ENCODE measurements at regions of chr19 and their contacts with region 1.

Region 1: DNA sequence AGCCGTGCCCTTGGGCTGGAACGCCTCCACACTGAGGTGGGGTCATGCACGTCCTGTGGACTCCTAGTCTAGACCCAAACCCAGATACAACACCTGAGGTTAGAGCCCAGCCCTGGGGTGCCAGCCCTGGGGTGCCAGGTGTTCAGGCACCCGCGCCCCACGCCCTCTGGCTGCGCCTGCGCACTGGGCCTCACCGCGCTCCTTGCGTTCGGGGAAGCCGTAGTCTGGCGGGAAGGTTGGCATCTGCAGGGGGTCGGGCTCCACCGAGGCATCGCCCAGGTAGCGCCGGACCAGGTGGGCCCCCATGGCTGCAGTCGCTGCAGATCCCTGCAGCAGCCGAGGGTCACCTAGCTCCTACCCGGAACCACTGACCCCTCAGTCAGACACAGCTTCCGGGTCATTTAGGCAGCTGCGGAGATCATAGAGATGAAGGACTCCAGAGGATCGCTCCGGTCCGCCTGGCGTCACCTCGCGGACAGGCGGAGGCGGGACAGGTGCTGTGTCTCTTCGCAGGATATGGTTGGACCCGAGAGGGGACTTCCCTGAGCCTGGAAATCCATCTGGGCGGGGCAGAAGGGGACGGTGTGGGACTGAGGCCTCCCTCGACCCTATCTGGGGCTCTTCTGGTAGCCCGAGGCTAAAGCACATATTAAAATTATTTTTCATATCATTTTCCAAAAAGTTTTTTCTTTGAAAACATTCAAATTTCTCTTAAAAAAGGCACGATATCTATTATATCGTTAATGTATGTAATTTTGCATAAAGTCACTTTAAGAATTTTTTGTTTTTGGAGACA is at the start of gene NDUFB7:
- DNase-seq: peak; percentile 76 to 91 (median 87)
- ATAC-seq: peak; percentile 98
- H3K4me3 ChIP-seq: peak within 1 kb of the TSS; percentile 99
- H3K4me3 Mint-ChIP-seq: peak within 1 kb of the TSS; percentile 92 to 97 (median 96)
- H3K27ac ChIP-seq: peak within 1 kb of the TSS; percentile 74
- H3K27ac Mint-ChIP-seq: peak within 1 kb of the TSS; percentile 83 to 96 (median 89)
- H3K4me1 ChIP-seq: peaks cover 14% of the 10 kb centered on the region in 2 donors
- H3K4me1 Mint-ChIP-seq: peaks cover 26 to 54% (median 37%) of the 10 kb centered on the region in 7 donors
- H3K27me3 ChIP-seq: no peaks in the 10 kb centered on the region
- H3K27me3 Mint-ChIP-seq: no peaks in the 10 kb centered on the region
- total RNA-seq, gene NDUFB7: 50.6 to 129 (median 63.4) TPM

Region 2: GRCh38 chr19:14091081-14091812 is 480.6 kb before region 1 on chr19:
- CTCF ChIA-PET with region 1: no interaction called
- POLR2A ChIA-PET with region 1: no interaction called
- intact Hi-C with region 1: loop called in 1 of 2 experiments (anchors 2 kb)
- DNase-seq: peak; percentile 56 to 89 (median 84)
- ATAC-seq: peak; percentile 71
- H3K4me3 ChIP-seq: peak overlapping the region; percentile 99
- H3K4me3 Mint-ChIP-seq: peak overlapping the region; percentile 81 to 100 (median 98)
- H3K27ac ChIP-seq: peak overlapping the region; percentile 89
- H3K27ac Mint-ChIP-seq: peak overlapping the region; percentile 89 to 100 (median 98)
- H3K4me1 ChIP-seq: peaks cover 8 to 10% of the 10 kb centered on the region in 2 donors
- H3K4me1 Mint-ChIP-seq: peaks cover 13 to 21% (median 18%) of the 10 kb centered on the region in 7 donors
- H3K27me3 ChIP-seq: no peaks in the 10 kb centered on the region
- H3K27me3 Mint-ChIP-seq: no peaks in the 10 kb centered on the region

Region 3: DNA sequence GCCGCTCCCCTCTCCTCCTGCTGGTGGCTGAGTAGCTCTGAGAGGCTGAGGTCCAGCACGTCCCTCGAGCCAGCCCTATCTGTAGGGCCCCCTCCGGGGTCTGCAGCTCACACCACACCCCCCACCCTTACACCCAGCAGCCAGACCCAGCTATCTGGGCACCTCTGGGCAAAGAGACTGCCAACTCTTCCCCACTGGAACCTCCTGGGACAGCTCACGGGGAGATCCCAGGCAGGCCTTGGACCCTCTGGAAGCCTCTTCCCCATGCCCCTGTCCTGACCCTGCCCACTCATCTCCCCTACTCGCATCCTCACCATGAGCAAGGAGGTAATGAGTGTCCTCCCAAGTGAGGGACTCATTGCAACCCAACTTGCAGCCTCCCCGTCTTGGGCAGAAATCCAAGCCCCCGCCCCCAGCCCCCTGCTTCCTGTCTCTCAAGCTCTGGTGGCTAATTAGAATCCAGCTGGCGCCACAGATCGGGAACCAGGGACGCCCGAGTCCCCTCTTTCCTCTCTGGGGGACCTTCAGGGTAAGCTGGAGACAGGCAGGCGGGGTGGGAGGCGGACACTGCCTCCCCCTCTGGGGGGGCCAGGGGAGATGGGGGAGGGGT is 388.0 kb before region 1 on chr19:
- CTCF ChIA-PET with region 1: no interaction called
- POLR2A ChIA-PET with region 1: no interaction called
- intact Hi-C with region 1: no loop called
- DNase-seq: no peak
- ATAC-seq: no peak
- H3K4me3 ChIP-seq: no peak overlapping the region
- H3K4me3 Mint-ChIP-seq: no peak overlapping the region
- H3K27ac ChIP-seq: no peak overlapping the region
- H3K27ac Mint-ChIP-seq: no peak overlapping the region
- H3K4me1 ChIP-seq: no peaks in the 10 kb centered on the region
- H3K4me1 Mint-ChIP-seq: peaks cover 0 to 16% (median 5%) of the 10 kb centered on the region in 7 donors
- H3K27me3 ChIP-seq: no peaks in the 10 kb centered on the region
- H3K27me3 Mint-ChIP-seq: no peaks in the 10 kb centered on the region

Region 4: DNA sequence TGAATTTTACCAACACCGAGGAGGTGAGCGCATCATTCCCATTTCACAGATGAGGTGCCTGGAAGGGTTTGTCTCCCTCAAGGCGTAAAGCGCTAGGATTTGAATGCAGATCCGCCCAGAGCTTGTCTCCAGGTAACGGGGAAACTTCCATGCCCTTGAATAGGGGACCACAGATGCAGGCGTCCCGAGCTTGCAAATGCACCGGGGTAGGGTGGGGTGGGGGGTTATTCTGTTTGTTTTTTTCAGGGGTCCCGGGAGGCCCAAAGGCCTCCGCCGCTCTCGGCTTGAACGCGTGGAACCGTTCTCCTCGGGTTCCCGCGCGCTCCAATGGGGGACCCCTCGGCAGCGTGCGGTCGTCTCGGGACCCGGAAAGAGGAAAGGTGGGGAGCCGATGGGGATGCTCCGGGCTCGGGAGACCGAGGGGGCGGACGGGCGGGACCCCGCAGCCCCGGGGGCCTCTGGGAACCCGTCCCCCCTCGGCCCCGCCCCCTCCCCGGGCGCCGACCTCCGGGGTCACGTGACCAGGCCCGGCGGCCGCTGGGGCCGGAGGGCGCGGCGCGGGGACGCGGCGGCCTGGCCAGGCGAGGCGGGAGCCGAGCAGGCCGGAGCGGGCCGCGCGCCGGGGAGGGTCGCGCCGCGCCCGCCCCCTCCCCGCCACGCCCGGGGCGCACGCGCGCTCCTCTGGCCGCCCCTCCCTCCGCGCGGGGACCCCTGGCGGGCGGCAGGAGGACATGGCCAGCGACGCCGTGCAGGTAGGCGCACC is 138.9 kb before region 1 on chr19 and contains the start of gene PKN1:
- CTCF ChIA-PET with region 1: interaction called, 4 read pairs
- POLR2A ChIA-PET with region 1: no interaction called
- intact Hi-C with region 1: loop called in 1 of 2 experiments (anchors 5 kb)
- DNase-seq: peak in 3 of 9 donors; percentile 10 to 79 (median 47)
- ATAC-seq: peak; percentile 23
- H3K4me3 ChIP-seq: peak within 1 kb of the TSS; percentile 67
- H3K4me3 Mint-ChIP-seq: peak within 1 kb of the TSS; percentile 74 to 92 (median 88)
- H3K27ac ChIP-seq: peak within 1 kb of the TSS; percentile 88
- H3K27ac Mint-ChIP-seq: peak within 1 kb of the TSS; percentile 79 to 97 (median 90)
- H3K4me1 ChIP-seq: peaks cover 18 to 24% of the 10 kb centered on the region in 2 donors
- H3K4me1 Mint-ChIP-seq: peaks cover 13 to 48% (median 34%) of the 10 kb centered on the region in 7 donors
- H3K27me3 ChIP-seq: no peaks in the 10 kb centered on the region
- H3K27me3 Mint-ChIP-seq: peaks cover 0 to 14% (median 0%) of the 10 kb centered on the region in 5 donors
- total RNA-seq, gene PKN1: 194 to 211 (median 206) TPM

Region 5: GRCh38 chr19:14517840-14518505 is 53.9 kb before region 1 on chr19 and contains the start of gene DNAJB1:
- CTCF ChIA-PET with region 1: interaction called, 5 read pairs
- POLR2A ChIA-PET with region 1: interaction called, 9 read pairs
- intact Hi-C with region 1: loop called in 1 of 2 experiments (anchors 1 kb)
- DNase-seq: peak in 2 of 9 donors; percentile 53 to 86
- ATAC-seq: peak; percentile 33
- H3K4me3 ChIP-seq: peak within 1 kb of the TSS; percentile 73
- H3K4me3 Mint-ChIP-seq: peak within 1 kb of the TSS; percentile 93 to 99 (median 96)
- H3K27ac ChIP-seq: peak within 1 kb of the TSS; percentile 97
- H3K27ac Mint-ChIP-seq: peak within 1 kb of the TSS; percentile 92 to 100 (median 98)
- H3K4me1 ChIP-seq: peaks cover 57 to 64% of the 10 kb centered on the region in 2 donors
- H3K4me1 Mint-ChIP-seq: peaks cover 42 to 80% (median 72%) of the 10 kb centered on the region in 7 donors
- H3K27me3 ChIP-seq: no peaks in the 10 kb centered on the region
- H3K27me3 Mint-ChIP-seq: peaks cover 0 to 2% (median 0%) of the 10 kb centered on the region in 5 donors
- total RNA-seq, gene DNAJB1: 87.4 to 574 (median 177) TPM

Region 6: DNA sequence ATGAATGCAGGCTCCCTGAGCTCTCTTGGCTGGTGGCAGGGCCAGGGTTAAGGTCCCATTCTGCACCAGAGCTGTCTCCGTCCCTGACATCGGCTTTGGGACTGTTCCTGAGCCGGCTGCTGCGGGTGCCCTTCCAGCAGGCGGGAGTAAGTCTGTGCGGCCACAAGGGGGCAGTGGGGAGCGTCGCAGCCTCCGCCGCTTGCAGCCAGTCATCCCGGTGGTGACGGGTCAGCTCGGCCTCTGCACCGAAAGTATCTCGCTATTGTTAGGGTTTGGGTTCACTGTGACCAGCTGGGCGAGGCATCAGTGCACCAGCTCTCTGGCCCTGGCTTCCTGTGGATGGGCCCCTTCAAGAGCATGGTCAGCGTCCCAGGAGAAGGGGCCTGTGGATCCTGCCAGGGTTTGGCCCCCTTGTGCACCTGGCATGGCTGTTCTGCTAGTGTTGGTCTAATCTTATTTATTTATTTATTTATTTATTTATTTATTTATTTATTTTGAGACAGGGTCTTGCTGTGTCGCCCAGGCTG is 15.2 kb before region 1 on chr19:
- CTCF ChIA-PET with region 1: interaction called, 8 read pairs
- POLR2A ChIA-PET with region 1: interaction called, 6 read pairs
- intact Hi-C with region 1: loop called in 1 of 2 experiments (anchors 2 kb)
- DNase-seq: peak; percentile 42 to 75 (median 60)
- ATAC-seq: peak; percentile 91
- H3K4me3 ChIP-seq: peak overlapping the region; percentile 10
- H3K4me3 Mint-ChIP-seq: peak overlapping the region; percentile 29 to 79 (median 68)
- H3K27ac ChIP-seq: no peak overlapping the region
- H3K27ac Mint-ChIP-seq: peak overlapping the region in 8 of 9 donors; percentile 79 to 90 (median 84)
- H3K4me1 ChIP-seq: peaks cover 15 to 53% of the 10 kb centered on the region in 2 donors
- H3K4me1 Mint-ChIP-seq: peaks cover 28 to 71% (median 40%) of the 10 kb centered on the region in 7 donors
- H3K27me3 ChIP-seq: no peaks in the 10 kb centered on the region
- H3K27me3 Mint-ChIP-seq: no peaks in the 10 kb centered on the region

Region 7: GRCh38 chr19:14715841-14716240 is 143.9 kb after region 1 on chr19:
- CTCF ChIA-PET with region 1: no interaction called
- POLR2A ChIA-PET with region 1: no interaction called
- intact Hi-C with region 1: no loop called
- DNase-seq: no peak
- ATAC-seq: no peak
- H3K4me3 ChIP-seq: no peak overlapping the region
- H3K4me3 Mint-ChIP-seq: no peak overlapping the region
- H3K27ac ChIP-seq: no peak overlapping the region
- H3K27ac Mint-ChIP-seq: no peak overlapping the region
- H3K4me1 ChIP-seq: no peaks in the 10 kb centered on the region
- H3K4me1 Mint-ChIP-seq: peaks cover 0 to 7% (median 0%) of the 10 kb centered on the region in 7 donors
- H3K27me3 ChIP-seq: no peaks in the 10 kb centered on the region
- H3K27me3 Mint-ChIP-seq: no peaks in the 10 kb centered on the region

Region 8: DNA sequence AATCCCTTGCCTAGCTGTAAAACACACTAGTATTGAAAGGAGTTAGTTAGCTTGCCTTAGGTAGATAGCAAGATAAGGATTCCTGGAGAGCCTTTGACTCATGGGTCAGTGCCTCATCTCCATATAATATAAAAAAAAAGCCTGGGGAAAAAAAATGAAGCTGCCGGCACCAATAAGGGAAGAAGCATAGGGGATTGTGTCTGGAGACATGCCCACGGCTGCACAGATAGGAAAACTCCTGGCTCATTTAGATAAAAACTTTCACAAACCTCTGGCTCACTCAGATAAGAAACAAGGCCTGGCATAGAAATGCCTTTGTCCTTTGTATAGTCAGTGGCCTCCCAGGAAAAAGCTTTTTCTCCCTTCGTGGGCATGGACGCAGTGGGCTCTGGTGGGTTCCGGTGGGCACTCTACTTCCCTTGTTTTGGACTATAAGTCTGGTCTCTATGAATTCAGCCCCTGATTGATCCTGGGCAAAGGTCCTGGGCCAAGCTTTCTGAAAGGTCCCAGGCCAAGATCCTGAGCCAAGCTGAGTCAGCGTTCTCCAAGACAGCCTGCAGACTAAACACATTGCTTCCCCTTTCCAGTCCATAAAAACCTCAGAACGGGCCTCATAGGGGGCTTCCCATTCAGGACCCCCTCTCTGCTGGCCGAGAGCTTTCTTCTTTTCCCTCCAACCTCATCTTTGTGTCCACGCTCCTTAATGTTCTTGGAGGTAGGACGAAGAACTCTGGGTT is 318.9 kb after region 1 on chr19:
- CTCF ChIA-PET with region 1: interaction called, 4 read pairs
- POLR2A ChIA-PET with region 1: no interaction called
- intact Hi-C with region 1: loop called in 1 of 2 experiments (anchors 1 kb)
- DNase-seq: no peak
- ATAC-seq: no peak
- H3K4me3 ChIP-seq: no peak overlapping the region
- H3K4me3 Mint-ChIP-seq: no peak overlapping the region
- H3K27ac ChIP-seq: no peak overlapping the region
- H3K27ac Mint-ChIP-seq: no peak overlapping the region
- H3K4me1 ChIP-seq: no peaks in the 10 kb centered on the region
- H3K4me1 Mint-ChIP-seq: peaks cover 0 to 7% (median 5%) of the 10 kb centered on the region in 7 donors
- H3K27me3 ChIP-seq: peaks cover 0 to 6% of the 10 kb centered on the region in 2 donors
- H3K27me3 Mint-ChIP-seq: peaks cover 18 to 48% (median 38%) of the 10 kb centered on the region in 5 donors

Region 9: GRCh38 chr19:15340086-15340485 is 768.2 kb after region 1 on chr19:
- CTCF ChIA-PET with region 1: no interaction called
- POLR2A ChIA-PET with region 1: no interaction called
- intact Hi-C with region 1: no loop called
- DNase-seq: no peak
- ATAC-seq: no peak
- H3K4me3 ChIP-seq: no peak overlapping the region
- H3K4me3 Mint-ChIP-seq: no peak overlapping the region
- H3K27ac ChIP-seq: no peak overlapping the region
- H3K27ac Mint-ChIP-seq: no peak overlapping the region
- H3K4me1 ChIP-seq: no peaks in the 10 kb centered on the region
- H3K4me1 Mint-ChIP-seq: peaks cover 0 to 4% (median 0%) of the 10 kb centered on the region in 7 donors
- H3K27me3 ChIP-seq: no peaks in the 10 kb centered on the region
- H3K27me3 Mint-ChIP-seq: no peaks in the 10 kb centered on the region